GM12878 (cell line): ENCODE measurements at regions of chr3 and their contacts with region 1.

Region 1: GRCh38 chr3:135018149-135018923 is 223.3 kb downstream of the EPHB1 start:
- DNase-seq: no peak
- ATAC-seq: peak; percentile 82
- H3K4me3 ChIP-seq: no peak overlapping the region
- H3K27ac ChIP-seq: peak overlapping the region; percentile 43
- H3K4me1 ChIP-seq: peaks cover 18% of the 10 kb centered on the region
- H3K27me3 ChIP-seq: no peaks in the 10 kb centered on the region
- CTCF ChIP-seq: no peak
- EP300 ChIP-seq: 0 out of 4 replicates have a peak, but pooled peaks of 1 of the 2 experiments have one; percentile 11
- POLR2A ChIP-seq: no peak
- RAD21 ChIP-seq: no peak

Region 2: DNA sequence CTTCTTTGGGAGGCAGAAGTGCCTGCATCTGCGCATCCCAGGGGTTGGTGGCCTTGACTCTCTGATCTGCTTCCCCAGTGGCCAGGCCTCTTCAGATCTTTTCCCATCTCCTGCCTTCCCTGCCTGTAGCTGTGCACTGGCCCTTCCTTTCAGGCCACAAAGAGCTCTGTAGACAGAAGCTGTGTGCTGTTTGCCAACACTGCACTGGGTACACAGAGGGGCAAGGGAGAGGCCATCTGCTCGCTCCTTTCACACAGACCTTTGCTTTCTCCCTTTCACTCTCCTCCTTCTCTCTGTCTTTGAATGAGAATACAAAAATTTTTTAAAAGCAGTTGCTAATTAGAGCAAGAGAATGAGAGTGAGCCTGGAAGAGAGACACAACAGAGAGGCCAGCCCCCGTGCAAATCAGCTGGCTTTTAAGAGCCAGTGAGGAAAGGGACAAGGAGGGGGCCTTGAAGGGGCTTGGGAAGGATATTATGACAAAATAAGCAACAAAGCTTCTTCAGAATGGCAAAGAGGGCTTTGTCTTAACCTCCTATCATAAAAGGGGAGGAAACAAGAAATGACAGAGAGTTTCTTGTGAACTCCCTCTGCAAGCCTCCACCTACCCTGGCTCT is 52.4 kb before region 1 on chr3:
- CTCF ChIA-PET with region 1: no interaction called
- POLR2A ChIA-PET with region 1: no interaction called
- RAD21 ChIA-PET with region 1: no interaction called
- SMC1A ChIA-PET with region 1: no interaction called
- in situ Hi-C with region 1: no loop called
- intact Hi-C with region 1: no loop called
- DNase-seq: no peak
- ATAC-seq: no peak
- H3K4me3 ChIP-seq: no peak overlapping the region
- H3K27ac ChIP-seq: no peak overlapping the region
- H3K4me1 ChIP-seq: no peaks in the 10 kb centered on the region
- H3K27me3 ChIP-seq: no peaks in the 10 kb centered on the region
- CTCF ChIP-seq: no peak
- EP300 ChIP-seq: no peak
- POLR2A ChIP-seq: no peak
- RAD21 ChIP-seq: no peak

Region 3: GRCh38 chr3:134998855-134999254 is 19.5 kb before region 1 on chr3:
- CTCF ChIA-PET with region 1: interaction called, 4 read pairs
- POLR2A ChIA-PET with region 1: interaction called, 3 read pairs
- RAD21 ChIA-PET with region 1: interaction called, 4 read pairs
- SMC1A ChIA-PET with region 1: interaction called, 16 read pairs
- in situ Hi-C with region 1: no loop called
- intact Hi-C with region 1: no loop called
- DNase-seq: no peak
- ATAC-seq: peak; percentile 72
- H3K4me3 ChIP-seq: no peak overlapping the region
- H3K27ac ChIP-seq: no peak overlapping the region
- H3K4me1 ChIP-seq: 0 out of 2 replicates have a peak, but pooled peaks cover 8% of the 10 kb centered on the region
- H3K27me3 ChIP-seq: no peaks in the 10 kb centered on the region
- CTCF ChIP-seq: no peak
- EP300 ChIP-seq: no peak
- POLR2A ChIP-seq: no peak
- RAD21 ChIP-seq: no peak